ENCODE measurements at regions of chr14 and their contacts with region 1.

Region 1: DNA sequence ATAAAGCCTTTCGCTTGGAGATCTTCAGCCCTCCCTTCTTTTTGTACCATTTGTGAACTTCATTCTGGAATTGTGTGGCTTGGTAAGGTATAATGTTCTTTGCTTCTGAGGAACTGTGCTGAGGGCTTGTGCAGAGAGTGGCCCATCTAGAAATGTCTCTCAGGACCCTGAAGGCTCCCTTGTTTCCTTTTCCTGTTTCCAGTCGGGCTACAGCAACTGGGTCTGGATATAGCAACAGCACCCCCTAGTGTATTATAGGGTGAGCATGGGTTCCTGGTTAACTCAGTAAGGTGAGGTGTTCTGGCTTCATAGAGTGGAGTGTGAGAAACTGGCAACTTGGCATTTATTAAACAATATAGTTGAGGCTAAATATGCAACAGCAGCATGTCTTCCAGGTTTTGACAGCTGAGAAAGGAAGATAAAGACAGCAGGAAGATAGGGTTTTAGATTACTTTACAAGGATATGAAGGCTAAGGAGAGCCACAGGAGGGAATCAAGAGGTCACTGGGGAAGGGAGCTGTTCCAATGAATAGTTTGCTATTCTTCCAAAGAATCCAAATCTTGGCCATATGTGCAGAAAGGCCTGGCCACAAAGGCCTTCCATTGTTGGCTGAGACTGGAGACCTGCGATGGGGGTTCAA is 49.1 kb upstream of the RNU6-8 start:
- DNase-seq: peak in 1 of 2 donors; percentile 58
- H3K4me3 ChIP-seq: no peak overlapping the region
- CTCF ChIP-seq: no peak
- POLR2A ChIP-seq: no peak

Region 2: GRCh38 chr14:31510222-31510621 is 741.9 kb before region 1 on chr14:
- intact Hi-C with region 1: loop called (anchors 10 kb)
- DNase-seq: no peak
- H3K4me3 ChIP-seq: no peak overlapping the region
- CTCF ChIP-seq: no peak
- POLR2A ChIP-seq: no peak

Region 3: DNA sequence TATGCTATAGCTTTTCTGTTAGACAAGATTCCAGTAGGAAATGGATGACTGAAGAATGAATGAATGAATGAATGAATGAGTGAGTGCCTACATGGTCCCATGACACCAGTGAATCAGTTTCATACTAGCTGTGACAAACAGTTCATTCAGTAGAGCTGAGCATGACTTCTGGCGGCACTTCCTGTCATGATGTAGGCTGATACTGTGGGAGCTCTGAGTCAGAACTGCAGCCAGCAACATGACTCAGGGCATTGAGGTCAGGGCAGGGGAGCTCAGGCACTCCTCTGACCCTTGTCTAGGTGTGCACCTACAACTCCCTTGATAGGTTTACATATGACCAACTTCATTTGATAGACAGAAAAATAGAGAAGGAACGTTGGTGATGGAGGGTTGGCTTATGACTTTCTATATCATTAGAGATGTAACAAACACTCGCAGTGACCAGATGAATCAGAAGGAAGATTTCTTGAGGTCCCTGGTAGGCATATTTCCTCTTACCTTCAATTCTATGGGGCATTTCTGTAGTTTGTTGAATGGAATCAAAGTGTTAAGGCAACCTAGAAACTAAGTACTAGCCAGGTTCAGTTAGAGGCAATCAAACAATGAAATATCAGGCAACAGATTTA is 314.3 kb before region 1 on chr14:
- intact Hi-C with region 1: loop called (anchors 10 kb)
- DNase-seq: peak in 1 of 2 donors; percentile 61
- H3K4me3 ChIP-seq: no peak overlapping the region
- CTCF ChIP-seq: no peak
- POLR2A ChIP-seq: no peak

Region 4: DNA sequence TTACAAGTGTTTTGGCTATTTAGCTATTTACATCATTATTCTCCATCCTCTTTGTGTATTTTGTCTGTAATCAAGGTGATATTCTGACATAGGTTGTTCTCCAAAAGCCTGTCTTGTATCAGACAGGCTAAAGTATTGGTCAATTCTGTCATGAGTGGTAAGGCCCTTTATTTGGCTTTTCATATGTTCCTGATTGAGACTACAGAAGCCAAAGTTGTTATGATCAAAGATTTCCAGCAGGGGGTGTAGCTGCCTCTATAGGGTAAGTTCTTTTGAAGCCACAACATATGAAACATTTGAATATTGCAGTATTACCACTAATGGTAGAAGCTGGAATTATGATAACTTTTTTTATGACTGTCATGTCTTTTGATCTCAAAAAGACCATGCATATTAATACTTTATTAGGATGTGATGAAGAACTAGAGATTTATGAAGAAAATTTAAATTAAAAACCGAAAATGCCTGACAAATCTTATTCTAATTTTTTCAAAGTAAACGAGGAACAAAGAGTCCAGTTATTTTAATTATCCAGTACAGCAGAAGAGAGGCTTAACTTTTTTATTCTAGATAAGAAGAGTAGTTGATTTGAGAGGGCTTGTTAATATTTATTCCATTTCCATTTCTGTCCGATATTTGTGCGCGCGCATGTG is 178.5 kb before region 1 on chr14:
- intact Hi-C with region 1: loop called (anchors 5 kb)
- DNase-seq: peak in 1 of 2 donors; percentile 76
- H3K4me3 ChIP-seq: no peak overlapping the region
- CTCF ChIP-seq: peak in 1 of 3 donors; percentile 50
- POLR2A ChIP-seq: no peak